Gastrocnemius medialis (tissue), 4 donors: ENCODE measurements at regions of chr5 and their contacts with region 1.

Region 1: DNA sequence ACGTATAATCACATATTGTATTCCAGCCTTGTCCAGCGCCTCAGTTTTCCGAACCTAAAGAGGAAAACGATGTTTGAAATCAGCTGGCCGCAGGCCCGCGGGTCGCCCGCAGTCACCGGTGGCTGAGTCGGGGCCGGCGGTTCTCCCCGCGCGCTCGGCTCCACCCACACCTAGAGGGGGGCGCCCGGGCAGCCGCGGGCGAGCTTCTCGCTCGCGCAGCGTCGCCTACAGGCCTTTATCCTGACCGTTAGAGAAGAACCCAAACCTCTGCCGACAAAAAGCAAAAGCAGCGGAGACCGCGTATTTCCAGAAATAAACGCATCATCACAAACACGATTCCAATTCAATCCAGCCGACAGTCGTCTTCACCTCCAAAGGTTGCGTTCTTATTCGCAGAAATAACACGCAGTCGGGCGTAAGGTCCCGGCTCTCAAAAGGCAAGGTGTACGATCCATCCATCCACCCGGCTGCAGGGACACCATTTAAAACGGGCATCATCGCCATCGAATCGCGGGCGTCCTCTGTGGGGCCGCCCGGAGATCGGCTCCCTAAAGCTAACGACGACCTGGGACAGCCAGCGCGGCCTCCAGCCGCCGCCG is 680 bp upstream of the NIPBL start:
- DNase-seq: peak; percentile 67 to 78
- ATAC-seq: peak; percentile 69 to 77
- H3K4me3 ChIP-seq: peak overlapping the region; percentile 93 to 99 (median 98)
- H3K27ac ChIP-seq: peak overlapping the region; percentile 91 to 100 (median 100)
- H3K4me1 ChIP-seq: peaks cover 46 to 55% of the 10 kb centered on the region in 2 donors
- H3K27me3 ChIP-seq: no peaks in the 10 kb centered on the region
- CTCF ChIP-seq: peak; percentile 14 to 66 (median 34)
- POLR2A ChIP-seq: no peak

Region 2: GRCh38 chr5:36657563-36657995 is 218.3 kb before region 1 on chr5:
- in situ Hi-C with region 1: no loop called
- intact Hi-C with region 1: loop called (anchors 5 kb)
- DNase-seq: peak; percentile 84 to 85
- ATAC-seq: peak; percentile 85 to 88
- H3K4me3 ChIP-seq: peak overlapping the region in 2 of 4 donors; percentile 6 to 23
- H3K27ac ChIP-seq: peak overlapping the region; percentile 85 to 89 (median 87)
- H3K4me1 ChIP-seq: peaks cover 56 to 57% of the 10 kb centered on the region in 2 donors
- H3K27me3 ChIP-seq: no peaks in the 10 kb centered on the region
- CTCF ChIP-seq: no peak
- POLR2A ChIP-seq: peak in 1 of 2 donors; percentile 55

Region 3: DNA sequence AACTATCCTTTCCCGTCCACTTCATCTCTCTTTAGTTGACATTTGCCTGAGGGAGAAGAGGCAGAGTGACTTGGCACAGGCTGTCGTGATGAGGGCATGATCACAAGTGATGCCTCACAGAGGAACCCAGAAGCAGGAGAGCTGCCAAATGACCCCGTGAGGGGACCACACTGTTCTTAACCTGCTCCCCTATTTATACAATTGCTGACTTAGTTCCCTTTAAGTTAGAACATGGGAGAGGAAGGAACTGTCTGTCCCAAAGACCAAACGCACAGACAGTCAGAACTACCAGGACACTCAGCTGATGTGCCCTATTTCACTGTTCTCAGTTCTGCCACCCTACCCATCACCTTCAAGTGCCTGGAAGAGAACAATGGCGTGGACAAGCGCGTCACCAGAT is 195.8 kb before region 1 on chr5:
- in situ Hi-C with region 1: no loop called
- intact Hi-C with region 1: no loop called
- DNase-seq: peak; percentile 28 to 63
- ATAC-seq: peak; percentile 40 to 43
- H3K4me3 ChIP-seq: no peak overlapping the region
- H3K27ac ChIP-seq: no peak overlapping the region
- H3K4me1 ChIP-seq: no peaks in the 10 kb centered on the region
- H3K27me3 ChIP-seq: no peaks in the 10 kb centered on the region
- CTCF ChIP-seq: no peak
- POLR2A ChIP-seq: peak in 1 of 2 donors; percentile 17

Region 4: GRCh38 chr5:36790838-36791237 is 85.1 kb before region 1 on chr5:
- in situ Hi-C with region 1: no loop called
- intact Hi-C with region 1: no loop called
- DNase-seq: no peak
- ATAC-seq: no peak
- H3K4me3 ChIP-seq: no peak overlapping the region
- H3K27ac ChIP-seq: no peak overlapping the region
- H3K4me1 ChIP-seq: peaks cover 0 to 12% of the 10 kb centered on the region in 2 donors
- H3K27me3 ChIP-seq: no peaks in the 10 kb centered on the region
- CTCF ChIP-seq: no peak
- POLR2A ChIP-seq: no peak

Region 5: DNA sequence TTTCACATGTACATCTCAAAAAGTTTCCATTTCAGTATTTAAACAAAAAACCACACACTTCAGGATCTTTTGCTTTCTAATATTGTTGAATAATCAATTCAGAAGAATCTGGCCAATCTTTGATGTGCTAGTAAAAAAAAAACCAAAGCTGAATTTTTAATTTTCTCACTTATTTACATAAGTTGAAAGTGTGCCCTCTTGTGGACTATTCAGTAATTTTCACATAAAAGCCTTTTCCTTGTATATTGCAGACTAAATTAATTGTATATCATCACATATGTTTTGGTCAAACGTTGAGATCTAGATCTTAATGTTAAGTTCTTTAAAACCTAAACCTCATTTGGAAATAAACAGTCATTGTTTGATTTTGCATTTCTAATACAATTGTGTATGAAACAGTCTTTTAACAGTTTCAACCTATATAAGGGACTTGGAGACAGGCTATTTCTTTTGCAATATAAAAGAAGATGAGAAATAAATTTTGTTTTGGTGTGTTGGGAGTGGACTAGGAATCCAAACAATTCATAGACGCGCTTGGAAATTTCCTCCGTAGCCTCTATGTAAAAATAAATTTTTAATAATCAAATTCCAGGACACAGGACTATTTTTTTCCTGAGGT is 68.8 kb after region 1 on chr5:
- in situ Hi-C with region 1: loop called in 1 of 4 experiments (anchors 10 kb)
- intact Hi-C with region 1: loop called (anchors 2 kb)
- DNase-seq: no peak
- ATAC-seq: no peak
- H3K4me3 ChIP-seq: no peak overlapping the region
- H3K27ac ChIP-seq: no peak overlapping the region
- H3K4me1 ChIP-seq: peaks cover 40 to 44% of the 10 kb centered on the region in 2 donors
- H3K27me3 ChIP-seq: no peaks in the 10 kb centered on the region
- CTCF ChIP-seq: peak in 4 of 5 experiments; percentile 20 to 68 (median 38)
- POLR2A ChIP-seq: no peak

Region 6: GRCh38 chr5:37005946-37006540 is 130.2 kb after region 1 on chr5:
- in situ Hi-C with region 1: no loop called
- intact Hi-C with region 1: loop called (anchors 5 kb)
- DNase-seq: no peak
- ATAC-seq: no peak
- H3K4me3 ChIP-seq: no peak overlapping the region
- H3K27ac ChIP-seq: no peak overlapping the region
- H3K4me1 ChIP-seq: no peaks in the 10 kb centered on the region
- H3K27me3 ChIP-seq: no peaks in the 10 kb centered on the region
- CTCF ChIP-seq: peak; percentile 13 to 59 (median 48)
- POLR2A ChIP-seq: no peak